Activated CD8-positive, alpha-beta T cell treated with anti-CD3 and anti-CD28 coated beads, Interleukin-2, amount 10 ng/mL, durations not matched to agents 7 days and 5 days (primary cell): ENCODE measurements at regions of chr22 and their contacts with region 1.

Region 1: DNA sequence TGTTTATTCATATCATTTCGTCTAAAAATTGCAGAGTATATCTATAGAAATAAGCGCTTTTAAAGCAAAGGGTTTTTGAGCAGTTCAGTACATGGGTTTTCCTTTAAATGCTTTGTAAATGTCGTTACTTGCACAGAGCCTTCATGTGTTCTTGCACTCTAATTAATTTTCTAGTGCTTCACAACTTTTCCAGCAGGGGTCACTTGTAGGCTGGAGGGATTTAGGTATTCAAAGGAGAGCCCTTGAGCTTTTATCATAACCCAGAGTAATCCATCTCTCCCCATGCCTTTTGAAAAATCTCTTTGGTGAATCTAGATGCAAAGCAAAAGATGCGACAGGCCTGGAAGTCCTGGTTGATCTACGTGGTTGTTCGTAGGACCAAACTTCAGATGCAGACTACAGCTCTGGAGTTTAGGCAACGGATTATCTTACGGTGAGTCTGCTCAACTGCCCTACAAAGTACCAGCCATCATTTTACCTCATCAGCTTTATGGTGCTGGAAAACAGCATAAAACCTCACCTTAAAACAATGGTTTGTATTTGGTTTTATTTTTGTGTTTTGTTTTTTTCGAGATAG is 60.4 kb downstream of the SFI1 start:
- DNase-seq: no peak
- ATAC-seq: no peak
- H3K4me3 Mint-ChIP-seq: no peak overlapping the region
- H3K27ac Mint-ChIP-seq: no peak overlapping the region
- H3K4me1 Mint-ChIP-seq: peaks cover 9% of the 10 kb centered on the region
- H3K27me3 Mint-ChIP-seq: no peaks in the 10 kb centered on the region

Region 2: DNA sequence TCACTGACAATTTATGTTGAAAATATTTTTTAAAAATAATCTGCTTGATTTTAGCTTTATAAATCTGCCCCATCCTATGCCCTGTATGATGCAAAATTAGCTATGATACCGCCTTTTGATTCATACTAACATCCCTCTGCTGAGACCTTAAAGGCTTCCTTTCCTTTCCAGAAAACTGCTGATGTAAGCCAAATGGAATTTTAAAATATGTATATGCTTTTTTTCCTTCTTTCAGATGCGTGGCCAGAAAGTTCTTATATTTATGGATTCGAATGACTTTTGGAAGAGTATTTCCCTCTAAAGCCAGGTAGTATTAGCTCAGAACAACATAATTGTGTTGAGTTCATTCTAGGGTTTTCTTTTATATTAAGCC is 25.9 kb before region 1 on chr22:
- CTCF ChIA-PET with region 1: interaction called, 10 read pairs
- POLR2A ChIA-PET with region 1: no interaction called
- DNase-seq: no peak
- ATAC-seq: no peak
- H3K4me3 Mint-ChIP-seq: no peak overlapping the region
- H3K27ac Mint-ChIP-seq: peak overlapping the region; percentile 40
- H3K4me1 Mint-ChIP-seq: peaks cover 46% of the 10 kb centered on the region
- H3K27me3 Mint-ChIP-seq: no peaks in the 10 kb centered on the region

Region 3: GRCh38 chr22:31537019-31537535 is 19.6 kb before region 1 on chr22:
- CTCF ChIA-PET with region 1: interaction called, 11 read pairs
- POLR2A ChIA-PET with region 1: no interaction called
- DNase-seq: no peak
- ATAC-seq: peak; percentile 50
- H3K4me3 Mint-ChIP-seq: no peak overlapping the region
- H3K27ac Mint-ChIP-seq: peak overlapping the region; percentile 82
- H3K4me1 Mint-ChIP-seq: peaks cover 40% of the 10 kb centered on the region
- H3K27me3 Mint-ChIP-seq: no peaks in the 10 kb centered on the region

Region 4: GRCh38 chr22:31544481-31545480 is 11.9 kb before region 1 on chr22:
- CTCF ChIA-PET with region 1: interaction called, 15 read pairs
- POLR2A ChIA-PET with region 1: no interaction called
- DNase-seq: no peak
- ATAC-seq: no peak
- H3K4me3 Mint-ChIP-seq: no peak overlapping the region
- H3K27ac Mint-ChIP-seq: no peak overlapping the region
- H3K4me1 Mint-ChIP-seq: no peaks in the 10 kb centered on the region
- H3K27me3 Mint-ChIP-seq: no peaks in the 10 kb centered on the region

Region 5: GRCh38 chr22:31630331-31631329 is 73.9 kb after region 1 on chr22:
- CTCF ChIA-PET with region 1: interaction called, 58 read pairs
- POLR2A ChIA-PET with region 1: interaction called, 3 read pairs
- DNase-seq: peak; percentile 93
- ATAC-seq: peak; percentile 89
- H3K4me3 Mint-ChIP-seq: peak overlapping the region; percentile 83
- H3K27ac Mint-ChIP-seq: peak overlapping the region; percentile 96
- H3K4me1 Mint-ChIP-seq: peaks cover 42% of the 10 kb centered on the region
- H3K27me3 Mint-ChIP-seq: no peaks in the 10 kb centered on the region